ENCODE measurements at regions of chr12 and their contacts with region 1.

Region 1: GRCh38 chr12:54603173-54603814 is 14.8 kb upstream of the PPP1R1A start:
- DNase-seq: peak; percentile 76 to 91 (median 88)
- H3K4me3 ChIP-seq: no peak overlapping the region
- H3K27ac ChIP-seq: no peak overlapping the region
- H3K4me1 ChIP-seq: no peaks in the 10 kb centered on the region
- H3K27me3 ChIP-seq: peaks cover 0 to 2% (median 0%) of the 10 kb centered on the region in 5 experiments

Region 2: GRCh38 chr12:54472494-54473262 is 130.6 kb before region 1 on chr12:
- CTCF ChIA-PET with region 1: no interaction called
- POLR2A ChIA-PET with region 1: no interaction called
- DNase-seq: no peak
- H3K4me3 ChIP-seq: peak overlapping the region in 4 of 7 experiments; percentile 15 to 63 (median 41)
- H3K27ac ChIP-seq: peak overlapping the region in 1 of 2 experiments; percentile 73
- H3K4me1 ChIP-seq: no peaks in the 10 kb centered on the region
- H3K27me3 ChIP-seq: no peaks in the 10 kb centered on the region

Region 3: GRCh38 chr12:54588110-54588889 is 15.0 kb before region 1 on chr12 and contains the start of gene PPP1R1A:
- CTCF ChIA-PET with region 1: interaction called, 17 read pairs
- POLR2A ChIA-PET with region 1: no interaction called
- DNase-seq: no peak
- H3K4me3 ChIP-seq: peak within 1 kb of the TSS; percentile 5 to 72 (median 41)
- H3K27ac ChIP-seq: no peak within 1 kb of the TSS
- H3K4me1 ChIP-seq: peaks cover 0 to 12% (median 6%) of the 10 kb centered on the region in 4 experiments
- H3K27me3 ChIP-seq: peaks cover 0 to 51% (median 43%) of the 10 kb centered on the region in 5 experiments

Region 4: DNA sequence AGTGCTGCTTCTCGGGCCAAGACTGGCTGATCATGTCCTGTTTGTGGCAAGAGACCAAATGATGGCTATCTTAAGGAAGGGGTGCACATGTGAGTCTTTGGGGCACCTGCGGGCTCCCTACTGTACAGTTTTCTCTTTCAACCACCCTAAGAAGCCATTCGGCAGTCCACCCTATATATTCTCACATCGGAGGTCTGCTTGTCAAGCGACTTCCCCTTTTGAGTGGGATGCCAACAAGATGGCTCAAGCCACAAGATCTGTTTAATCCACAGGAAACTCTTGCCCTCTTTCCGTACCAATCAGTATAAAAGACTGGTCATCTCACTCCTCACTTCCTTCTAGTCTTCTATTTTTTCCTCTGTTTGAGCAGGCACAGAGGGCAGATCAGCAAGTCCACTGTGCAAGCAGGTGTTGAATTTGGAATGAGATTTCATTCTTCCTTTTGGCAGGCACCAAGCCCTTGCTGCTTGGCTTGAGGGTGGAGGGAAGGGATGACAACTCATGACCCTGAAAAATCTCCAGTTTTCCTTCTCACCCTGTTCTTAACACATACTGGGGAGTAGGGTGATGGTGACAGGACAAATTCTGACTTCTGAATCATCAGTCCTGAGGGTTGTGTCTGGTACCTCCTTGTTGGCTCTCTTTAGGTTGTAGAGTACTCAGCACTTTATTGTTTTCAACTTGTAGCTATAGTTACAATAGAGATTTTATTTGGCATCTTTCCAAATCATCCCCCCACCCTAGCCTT is 13.8 kb after region 1 on chr12:
- CTCF ChIA-PET with region 1: interaction called, 20 read pairs
- POLR2A ChIA-PET with region 1: no interaction called
- DNase-seq: peak; percentile 56 to 93 (median 89)
- H3K4me3 ChIP-seq: peak overlapping the region in 3 of 7 experiments; percentile 17 to 34 (median 22)
- H3K27ac ChIP-seq: peak overlapping the region in 1 of 2 experiments; percentile 46
- H3K4me1 ChIP-seq: peaks cover 7 to 18% (median 15%) of the 10 kb centered on the region in 4 experiments
- H3K27me3 ChIP-seq: no peaks in the 10 kb centered on the region